ENCODE measurements at regions of chr5 and their contacts with region 1.

Region 1: GRCh38 chr5:181088289-181088688 is 42.7 kb downstream of the OR2V1 start:
- DNase-seq: no peak
- H3K4me3 ChIP-seq: no peak overlapping the region
- H3K27ac ChIP-seq: no peak overlapping the region
- H3K4me1 ChIP-seq: peaks cover 0 to 6% (median 0%) of the 10 kb centered on the region in 4 experiments; a peak in 2 of 7 replicates
- H3K27me3 ChIP-seq: peaks cover 0 to 3% (median 2%) of the 10 kb centered on the region in 4 experiments; a peak in 5 of 7 replicates
- CTCF ChIP-seq: peak; percentile 71 to 84 (median 81)
- EP300 ChIP-seq: no peak
- POLR2A ChIP-seq: no peak
- RAD21 ChIP-seq: peak; percentile 72

Region 2: DNA sequence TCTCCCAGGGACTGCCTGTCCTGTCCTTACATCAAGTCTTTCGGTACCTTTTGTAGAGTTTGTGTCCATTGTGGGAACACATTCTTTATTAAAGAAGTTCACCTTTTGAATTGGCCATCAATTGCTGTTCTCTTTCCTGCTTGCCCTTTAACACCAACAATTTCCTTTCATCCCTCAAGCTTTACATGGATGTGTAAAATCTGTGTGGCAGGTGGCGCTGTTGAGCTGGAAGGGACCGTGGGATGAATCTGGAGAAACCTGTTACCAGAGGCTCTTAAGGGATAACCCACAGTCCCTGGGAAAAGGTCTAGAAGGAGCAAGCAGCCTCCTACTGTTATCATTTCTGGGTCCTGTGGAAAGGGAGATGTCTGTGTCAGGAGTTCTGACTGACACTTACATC is 219.3 kb before region 1 on chr5:
- CTCF ChIA-PET with region 1: interaction called, 15 read pairs
- POLR2A ChIA-PET with region 1: no interaction called
- DNase-seq: peak in 1 of 2 experiments; percentile 93
- H3K4me3 ChIP-seq: no peak overlapping the region
- H3K27ac ChIP-seq: no peak overlapping the region
- H3K4me1 ChIP-seq: no peaks in the 10 kb centered on the region; a peak in 1 of 7 replicates
- H3K27me3 ChIP-seq: no peaks in the 10 kb centered on the region
- CTCF ChIP-seq: peak; percentile 59 to 89 (median 86)
- EP300 ChIP-seq: no peak
- POLR2A ChIP-seq: no peak
- RAD21 ChIP-seq: peak; percentile 93

Region 3: GRCh38 chr5:181069767-181070491 is 18.4 kb before region 1 on chr5:
- CTCF ChIA-PET with region 1: interaction called, 6 read pairs
- POLR2A ChIA-PET with region 1: interaction called, 10 read pairs
- DNase-seq: peak in 1 of 2 experiments; percentile 85
- H3K4me3 ChIP-seq: peak overlapping the region in 3 of 4 experiments; percentile 14 to 49 (median 23); a peak in 6 of 8 replicates
- H3K27ac ChIP-seq: no peak overlapping the region
- H3K4me1 ChIP-seq: peaks cover 0 to 5% (median 3%) of the 10 kb centered on the region in 4 experiments; a peak in 3 of 7 replicates
- H3K27me3 ChIP-seq: no peaks in the 10 kb centered on the region; a peak in 2 of 7 replicates
- CTCF ChIP-seq: no peak
- EP300 ChIP-seq: no peak
- POLR2A ChIP-seq: peak; percentile 50 to 85
- RAD21 ChIP-seq: no peak